Sigmoid colon (tissue), 7 donors: ENCODE measurements at regions of chr2 and their contacts with region 1.

Region 1: GRCh38 chr2:38181806-38182491 is 106.0 kb upstream of the CYP1B1 start:
- DNase-seq: no peak
- H3K4me3 ChIP-seq: no peak overlapping the region
- H3K27ac ChIP-seq: peak overlapping the region in 3 of 4 donors; percentile 67 to 75 (median 72)
- H3K4me1 ChIP-seq: peaks cover 0 to 76% (median 60%) of the 10 kb centered on the region in 4 donors
- H3K27me3 ChIP-seq: no peaks in the 10 kb centered on the region
- CTCF ChIP-seq: no peak
- EP300 ChIP-seq: no peak
- POLR2A ChIP-seq: no peak

Region 2: DNA sequence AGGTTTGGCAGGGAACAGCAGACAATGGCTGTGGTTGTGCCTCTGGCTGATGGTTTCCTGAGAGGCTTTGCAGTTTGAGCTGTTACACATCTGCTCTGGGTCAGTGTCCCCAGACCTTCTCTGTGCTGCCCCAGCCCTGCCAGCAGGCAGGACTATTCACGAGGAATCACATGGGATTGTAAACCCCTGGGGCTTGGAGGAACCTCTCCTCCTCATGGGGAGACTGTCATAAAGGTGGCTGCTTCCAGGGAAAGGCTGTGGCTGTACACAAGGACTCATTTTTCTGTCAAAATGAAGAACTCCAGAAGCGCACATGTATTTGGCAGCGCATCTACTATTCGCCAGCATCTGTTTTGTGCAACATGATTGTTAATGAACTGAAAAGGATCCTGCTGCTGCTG is 36.6 kb after region 1 on chr2:
- intact Hi-C with region 1: loop called (anchors 5 kb)
- DNase-seq: peak; percentile 88
- H3K4me3 ChIP-seq: no peak overlapping the region
- H3K27ac ChIP-seq: peak overlapping the region in 3 of 4 donors; percentile 70 to 80 (median 78)
- H3K4me1 ChIP-seq: peaks cover 0 to 52% (median 35%) of the 10 kb centered on the region in 4 donors
- H3K27me3 ChIP-seq: no peaks in the 10 kb centered on the region
- CTCF ChIP-seq: no peak
- EP300 ChIP-seq: peak; percentile 16 to 84 (median 66)
- POLR2A ChIP-seq: no peak